Activated T-helper 1 cell treated with anti-CD3 and anti-CD28 coated beads, Interleukin-12 subunit alpha, Interleukin-12 subunit beta, Interleukin-2, Interleukin-4 antibody, amounts not matched to agents 30 ng/mL and 10 ng/mL and 1 ng/mL, durations not matched to agents 14 hours and 24 hours and 36 hours (primary cell): ENCODE measurements at regions of chr10 and their contacts with region 1.

Region 1: GRCh38 chr10:62159351-62159750 is 109.3 kb downstream of the RTKN2 start:
- DNase-seq: no peak
- H3K4me3 Mint-ChIP-seq: no peak overlapping the region
- H3K27ac Mint-ChIP-seq: no peak overlapping the region
- H3K4me1 Mint-ChIP-seq: no peaks in the 10 kb centered on the region
- H3K27me3 Mint-ChIP-seq: no peaks in the 10 kb centered on the region

Region 2: GRCh38 chr10:62121187-62121530 is 38.2 kb before region 1 on chr10:
- intact Hi-C with region 1: loop called (anchors 5 kb)
- DNase-seq: no peak
- H3K4me3 Mint-ChIP-seq: peak overlapping the region; percentile 1
- H3K27ac Mint-ChIP-seq: peak overlapping the region; percentile 64
- H3K4me1 Mint-ChIP-seq: peaks cover 16% of the 10 kb centered on the region
- H3K27me3 Mint-ChIP-seq: no peaks in the 10 kb centered on the region